ENCODE measurements at regions of chr1 and their contacts with region 1.

Region 1: DNA sequence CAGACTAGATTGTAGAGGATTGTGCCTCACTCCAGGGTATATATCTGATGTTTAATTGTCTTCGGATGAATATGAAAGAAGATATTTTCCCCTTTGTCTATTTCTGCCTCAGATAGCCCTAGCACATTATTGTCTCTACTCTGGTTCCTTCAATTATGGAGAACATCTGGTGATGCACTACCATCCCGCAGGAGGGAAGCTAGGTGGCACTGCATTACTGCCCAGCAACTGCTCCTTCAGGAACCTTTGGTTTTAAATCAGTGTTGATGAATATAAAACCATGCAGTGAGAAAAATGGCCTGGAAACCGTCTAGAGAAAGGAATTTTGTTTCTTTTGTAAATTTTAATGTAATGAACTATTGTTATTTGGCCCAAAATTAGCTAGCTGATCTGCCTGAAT is 68.5 kb downstream of the GPR88 start:
- DNase-seq: peak; percentile 37
- H3K4me3 ChIP-seq: no peak overlapping the region
- H3K27ac ChIP-seq: no peak overlapping the region
- H3K4me1 ChIP-seq: no peaks in the 10 kb centered on the region
- H3K27me3 ChIP-seq: peaks cover 9% of the 10 kb centered on the region
- CTCF ChIP-seq: peak; percentile 64

Region 2: DNA sequence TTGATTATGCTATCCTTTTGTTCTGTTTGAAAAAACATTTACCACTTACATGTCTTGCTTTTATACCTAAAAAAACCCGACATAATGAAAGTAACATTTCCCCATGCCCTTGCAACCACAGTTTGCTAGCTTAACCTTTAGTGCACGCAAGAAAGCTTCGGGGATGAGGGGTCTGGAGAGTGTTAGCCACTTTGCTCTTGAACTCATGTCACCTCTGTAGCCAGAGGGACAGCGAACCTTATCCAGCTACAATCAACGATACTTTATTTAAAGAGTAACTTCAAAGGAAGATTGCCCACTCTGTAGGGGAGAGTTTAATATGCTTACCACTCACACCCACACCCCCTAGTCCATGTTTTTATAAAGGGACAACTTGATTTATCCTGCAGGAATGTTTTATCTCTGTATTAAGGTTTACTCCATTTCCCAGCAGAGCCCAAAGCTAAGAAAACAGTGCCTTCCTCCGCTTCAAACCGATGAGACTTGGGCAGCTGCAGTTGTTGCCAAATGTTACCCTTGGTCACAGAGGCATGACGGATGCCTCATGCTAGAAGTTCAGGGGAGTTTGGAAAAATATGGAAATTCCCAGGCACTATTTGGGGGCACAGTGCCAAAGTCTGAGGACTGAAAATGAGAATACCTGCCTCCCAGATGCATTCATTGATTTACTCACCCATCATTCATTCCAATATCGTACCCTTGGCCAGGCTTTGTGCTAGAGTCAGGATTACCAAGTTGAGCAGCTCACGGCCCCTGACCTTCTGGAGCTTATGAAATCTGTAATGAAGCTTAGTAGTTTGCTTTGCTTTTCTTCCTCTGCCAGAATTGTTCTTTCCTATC is 51.7 kb after region 1 on chr1:
- CTCF ChIA-PET with region 1: no interaction called
- POLR2A ChIA-PET with region 1: no interaction called
- intact Hi-C with region 1: no loop called
- DNase-seq: no peak
- H3K4me3 ChIP-seq: no peak overlapping the region
- H3K27ac ChIP-seq: no peak overlapping the region
- H3K4me1 ChIP-seq: no peaks in the 10 kb centered on the region
- H3K27me3 ChIP-seq: peaks cover 4% of the 10 kb centered on the region
- CTCF ChIP-seq: no peak

Region 3: DNA sequence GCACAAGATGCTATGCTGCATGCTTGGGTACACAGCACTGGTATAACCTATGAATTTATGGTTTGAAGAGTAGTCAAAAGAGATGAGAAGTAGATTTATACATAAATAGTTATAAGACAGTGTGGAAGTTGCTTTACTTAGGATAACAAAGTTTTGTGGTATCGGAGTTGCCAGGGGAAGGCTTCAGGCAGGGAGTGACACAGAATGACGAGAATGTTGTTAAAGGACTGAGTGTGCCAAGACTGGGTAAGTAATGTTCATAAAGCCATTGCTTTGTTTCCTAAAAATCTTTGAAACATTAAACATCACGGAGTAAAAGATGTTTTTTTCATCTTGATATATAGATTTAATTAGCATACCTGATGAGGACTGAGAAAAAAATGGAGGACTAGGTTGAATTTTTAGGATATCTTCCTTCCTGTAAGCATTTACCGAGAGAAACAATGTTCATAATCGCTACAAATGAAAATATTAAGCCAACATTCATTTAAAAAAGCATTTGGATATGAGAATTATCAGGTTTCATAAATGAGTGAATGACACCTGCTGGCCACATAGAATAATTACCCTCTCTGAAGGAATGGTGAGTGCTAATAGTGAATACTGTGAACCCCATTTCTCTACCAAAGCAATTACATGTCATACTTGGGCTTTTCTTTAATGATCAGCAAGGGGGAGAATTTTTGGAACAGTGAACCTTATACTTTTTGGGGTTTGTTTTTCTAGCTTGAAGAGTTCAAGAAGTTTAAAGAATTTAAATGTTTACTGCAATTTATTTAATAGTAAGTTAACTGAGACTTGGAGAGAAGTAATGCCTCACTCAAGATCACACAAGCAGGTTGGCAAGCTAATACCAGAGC is 259.8 kb after region 1 on chr1:
- CTCF ChIA-PET with region 1: no interaction called
- POLR2A ChIA-PET with region 1: no interaction called
- intact Hi-C with region 1: loop called (anchors 1 kb)
- DNase-seq: peak; percentile 40
- H3K4me3 ChIP-seq: no peak overlapping the region
- H3K27ac ChIP-seq: no peak overlapping the region
- H3K4me1 ChIP-seq: no peaks in the 10 kb centered on the region
- H3K27me3 ChIP-seq: no peaks in the 10 kb centered on the region
- CTCF ChIP-seq: peak; percentile 68

Region 4: GRCh38 chr1:100928128-100928527 is 321.7 kb after region 1 on chr1:
- CTCF ChIA-PET with region 1: no interaction called
- POLR2A ChIA-PET with region 1: no interaction called
- intact Hi-C with region 1: no loop called
- DNase-seq: no peak
- H3K4me3 ChIP-seq: no peak overlapping the region
- H3K27ac ChIP-seq: no peak overlapping the region
- H3K4me1 ChIP-seq: no peaks in the 10 kb centered on the region
- H3K27me3 ChIP-seq: no peaks in the 10 kb centered on the region
- CTCF ChIP-seq: peak; percentile 26; the same call in 1 of the 2 replicates